K562 (cell line): ENCODE measurements at regions of chr11 and their contacts with region 1.

Region 1: DNA sequence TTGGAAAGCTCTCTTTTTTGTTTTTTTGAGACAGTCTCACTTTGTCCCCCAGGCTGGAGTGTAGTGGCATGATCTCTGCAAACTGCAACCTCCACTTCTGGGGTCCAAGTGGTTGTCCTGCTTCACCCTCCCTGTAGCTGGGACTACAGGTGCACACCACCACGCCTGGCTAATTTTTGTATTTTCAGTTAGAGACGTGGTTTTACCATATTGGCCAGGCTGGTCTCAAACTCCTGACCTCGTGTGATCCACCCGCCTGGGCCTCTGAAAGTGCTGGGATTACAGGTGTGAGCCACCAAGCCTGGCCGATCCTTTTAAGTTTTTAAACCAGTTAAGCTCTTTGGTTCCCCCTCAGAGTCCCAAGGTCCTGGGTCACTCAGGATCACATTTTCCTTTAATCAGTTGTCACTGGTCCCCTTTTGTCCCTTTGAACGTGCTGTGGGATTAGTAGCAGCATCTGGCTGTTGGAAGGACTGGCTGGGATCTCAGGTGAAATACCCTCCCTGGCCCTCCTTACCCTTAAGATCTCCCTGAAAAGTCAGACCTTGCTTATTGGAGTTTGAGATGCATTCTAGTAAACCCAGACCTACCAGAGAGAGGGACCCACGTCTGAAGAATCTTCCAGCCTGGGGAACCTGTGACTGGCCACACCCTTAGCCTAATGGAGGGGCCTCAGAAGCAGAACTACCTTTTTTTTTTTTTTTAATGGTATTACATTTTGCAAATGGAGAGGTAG is 8.1 kb downstream of the MALAT1 start:
- DNase-seq: peak in 1 of 4 experiments; percentile 92
- ATAC-seq: peak; percentile 73
- H3K4me3 ChIP-seq: peak overlapping the region; percentile 84
- H3K27ac ChIP-seq: peak overlapping the region; percentile 99
- H3K4me1 ChIP-seq: peaks cover 8% of the 10 kb centered on the region in 2 experiments; a peak in 4 of 5 replicates
- H3K27me3 ChIP-seq: no peaks in the 10 kb centered on the region
- CTCF ChIP-seq: 0 out of 6 replicates have a peak, but pooled peaks of 1 of the 3 experiments have one; percentile 6
- EP300 ChIP-seq: no peak; the same call in 1 of the 2 replicates
- POLR2A ChIP-seq: peak; percentile 99
- RAD21 ChIP-seq: peak; percentile 14 to 42; a peak in 3 of 4 replicates

Region 2: GRCh38 chr11:65274735-65275682 is 231.9 kb before region 1 on chr11:
- CTCF ChIA-PET with region 1: interaction called, 6 read pairs
- POLR2A ChIA-PET with region 1: interaction called, 5 read pairs
- in situ Hi-C with region 1: loop called (anchors 5 kb)
- intact Hi-C with region 1: loop called (anchors 2 kb)
- DNase-seq: peak; percentile 72 to 92 (median 77)
- ATAC-seq: peak; percentile 97
- H3K4me3 ChIP-seq: no peak overlapping the region
- H3K27ac ChIP-seq: peak overlapping the region; percentile 71
- H3K4me1 ChIP-seq: peaks cover 0 to 9% of the 10 kb centered on the region in 2 experiments; a peak in 3 of 5 replicates
- H3K27me3 ChIP-seq: no peaks in the 10 kb centered on the region
- CTCF ChIP-seq: peak; percentile 86 to 97 (median 88)
- EP300 ChIP-seq: peak; percentile 73
- POLR2A ChIP-seq: no peak
- RAD21 ChIP-seq: peak; percentile 94 to 95

Region 3: GRCh38 chr11:65382033-65382807 is 124.7 kb before region 1 on chr11 and contains the start of gene SLC25A45:
- CTCF ChIA-PET with region 1: interaction called, 7 read pairs
- POLR2A ChIA-PET with region 1: interaction called, 253 read pairs
- in situ Hi-C with region 1: no loop called
- intact Hi-C with region 1: loop called (anchors 1 kb)
- DNase-seq: peak; percentile 86 to 96 (median 90)
- ATAC-seq: peak; percentile 93
- H3K4me3 ChIP-seq: peak within 1 kb of the TSS; percentile 37
- H3K27ac ChIP-seq: peak within 1 kb of the TSS; percentile 93
- H3K4me1 ChIP-seq: peaks cover 35 to 81% of the 10 kb centered on the region in 2 experiments
- H3K27me3 ChIP-seq: no peaks in the 10 kb centered on the region
- CTCF ChIP-seq: peak; percentile 84 to 92 (median 91)
- EP300 ChIP-seq: peak; percentile 85
- POLR2A ChIP-seq: peak; percentile 73
- RAD21 ChIP-seq: peak; percentile 93 to 95
- polyA plus RNA-seq, gene SLC25A45: 0.15 to 0.34 TPM

Region 4: GRCh38 chr11:65403607-65404121 is 103.3 kb before region 1 on chr11:
- CTCF ChIA-PET with region 1: no interaction called
- POLR2A ChIA-PET with region 1: interaction called, 10 read pairs
- in situ Hi-C with region 1: no loop called
- intact Hi-C with region 1: no loop called
- DNase-seq: peak in 1 of 4 experiments; percentile 57
- ATAC-seq: peak; percentile 76
- H3K4me3 ChIP-seq: no peak overlapping the region
- H3K27ac ChIP-seq: peak overlapping the region; percentile 33; the same call in 2 of the 3 replicates
- H3K4me1 ChIP-seq: peaks cover 9 to 49% of the 10 kb centered on the region in 2 experiments
- H3K27me3 ChIP-seq: no peaks in the 10 kb centered on the region
- CTCF ChIP-seq: no peak
- EP300 ChIP-seq: no peak
- POLR2A ChIP-seq: no peak
- RAD21 ChIP-seq: no peak

Region 5: DNA sequence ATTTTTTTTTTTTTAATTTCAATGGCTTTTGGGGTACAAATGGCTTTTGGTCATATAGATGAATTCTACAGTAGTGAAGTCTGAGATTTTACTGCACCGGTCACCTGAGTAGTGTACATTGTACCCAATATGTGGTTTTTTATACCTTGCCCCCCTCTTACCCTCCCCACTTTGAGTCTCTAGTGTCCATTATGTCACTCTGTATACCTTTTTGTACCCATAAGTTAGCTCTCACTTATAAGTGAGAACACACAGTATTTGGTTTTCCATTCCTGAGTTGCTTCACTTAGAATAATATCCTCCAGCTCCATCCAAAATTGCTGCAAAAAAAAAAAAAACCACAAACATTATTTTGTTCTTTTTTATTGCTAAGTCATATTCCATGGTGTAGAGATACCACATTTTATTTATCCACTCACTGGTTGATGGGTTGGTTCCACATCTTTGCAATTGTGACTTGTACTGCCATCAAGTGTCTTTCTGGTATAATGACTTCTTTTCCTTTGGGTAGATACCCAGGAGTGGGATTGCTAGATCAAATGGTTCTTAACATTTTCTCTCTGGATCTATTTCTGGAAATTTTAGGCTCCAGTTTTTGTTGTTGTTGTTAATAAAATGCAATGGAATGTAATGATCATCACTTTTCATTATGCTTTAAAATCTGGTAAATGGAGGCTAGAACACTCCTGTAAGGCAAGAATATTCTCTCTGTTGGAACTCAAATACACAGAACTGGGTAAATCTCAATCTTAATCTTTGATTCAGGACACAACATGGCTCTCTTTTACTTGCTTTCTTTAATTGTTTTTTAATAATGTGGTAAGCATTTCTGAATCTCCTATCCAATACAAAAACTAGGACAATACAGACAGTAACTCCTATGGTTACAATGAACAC is 74.0 kb before region 1 on chr11:
- CTCF ChIA-PET with region 1: interaction called, 3 read pairs
- POLR2A ChIA-PET with region 1: interaction called, 1,349 read pairs
- in situ Hi-C with region 1: no loop called
- intact Hi-C with region 1: no loop called
- DNase-seq: peak in 1 of 4 experiments; percentile 62
- ATAC-seq: no peak
- H3K4me3 ChIP-seq: no peak overlapping the region
- H3K27ac ChIP-seq: no peak overlapping the region
- H3K4me1 ChIP-seq: peaks cover 3 to 29% of the 10 kb centered on the region in 2 experiments; a peak in 4 of 5 replicates
- H3K27me3 ChIP-seq: no peaks in the 10 kb centered on the region
- CTCF ChIP-seq: peak; percentile 27 to 61 (median 32); a peak in 3 of 6 replicates
- EP300 ChIP-seq: no peak
- POLR2A ChIP-seq: peak; percentile 64
- RAD21 ChIP-seq: peak; percentile 59 to 71

Region 6: DNA sequence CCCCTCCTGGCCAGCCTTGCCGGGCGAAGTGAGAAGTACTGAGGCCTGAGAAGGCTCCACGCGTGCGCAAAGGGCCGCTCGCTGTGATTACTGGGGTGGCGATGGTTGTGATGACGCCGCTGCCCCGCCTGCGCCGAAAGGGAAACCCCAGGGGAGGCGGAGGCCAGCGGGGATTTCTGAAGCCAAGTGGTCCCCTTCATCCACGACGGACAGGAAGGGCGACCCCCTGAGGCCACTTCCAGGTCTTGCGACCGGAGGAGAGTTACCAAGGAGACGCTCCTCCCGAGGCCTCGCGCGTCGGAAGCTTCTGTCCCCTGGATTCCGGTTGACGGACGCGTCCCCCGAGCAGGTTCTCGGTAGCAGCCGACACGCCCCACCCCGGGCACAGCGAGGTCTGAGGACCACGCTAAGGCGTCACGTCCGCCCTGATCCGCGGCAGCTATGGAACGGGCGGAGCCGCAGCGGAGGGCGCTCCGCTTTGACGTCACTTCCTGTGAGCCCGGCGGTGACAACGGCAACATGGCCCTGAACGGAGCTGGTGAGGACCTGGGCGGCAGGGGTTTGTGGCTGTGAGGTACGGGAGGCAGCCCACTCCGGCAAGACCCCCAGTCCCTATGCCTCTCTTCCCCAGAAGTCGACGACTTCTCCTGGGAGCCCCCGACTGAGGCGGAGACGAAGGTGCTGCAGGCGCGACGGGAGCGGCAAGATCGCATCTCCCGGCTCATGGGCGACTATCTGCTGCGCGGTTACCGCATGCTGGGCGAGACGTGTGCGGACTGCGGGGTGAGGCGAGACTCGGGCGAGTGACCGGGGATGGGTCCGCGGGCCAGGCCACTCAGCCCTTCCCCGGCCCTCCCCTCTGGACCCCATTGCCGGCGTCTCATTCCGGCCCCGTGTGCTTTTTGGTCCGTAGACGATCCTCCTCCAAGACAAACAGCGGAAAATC is 63.3 kb after region 1 on chr11 and contains the start of gene ZNRD2:
- CTCF ChIA-PET with region 1: no interaction called
- POLR2A ChIA-PET with region 1: interaction called, 24 read pairs
- in situ Hi-C with region 1: no loop called
- intact Hi-C with region 1: no loop called
- DNase-seq: peak; percentile 88 to 99 (median 92)
- ATAC-seq: peak; percentile 82
- H3K4me3 ChIP-seq: peak within 1 kb of the TSS; percentile 65
- H3K27ac ChIP-seq: peak within 1 kb of the TSS; percentile 68
- H3K4me1 ChIP-seq: peaks cover 39 to 63% of the 10 kb centered on the region in 2 experiments
- H3K27me3 ChIP-seq: no peaks in the 10 kb centered on the region
- CTCF ChIP-seq: peak; percentile 77 to 86 (median 81)
- EP300 ChIP-seq: no peak
- POLR2A ChIP-seq: peak; percentile 85
- RAD21 ChIP-seq: peak; percentile 51 to 75
- polyA plus RNA-seq, gene ZNRD2: 35.6 to 66.3 TPM